ENCODE measurements at regions of chr17 and their contacts with region 1.

Region 1: GRCh38 chr17:3636154-3636907 is at the starts of genes CTNS and SHPK:
- DNase-seq: peak; percentile 92 to 94 (median 93)
- H3K4me3 ChIP-seq: peak within 1 kb of the TSS; percentile 61 to 93 (median 71)
- H3K4me3 Mint-ChIP-seq: peak within 1 kb of the TSS; percentile 86 to 97
- H3K27ac ChIP-seq: peak within 1 kb of the TSS; percentile 84 to 94
- H3K27ac Mint-ChIP-seq: peak within 1 kb of the TSS; percentile 94 to 100 (median 99)
- H3K4me1 ChIP-seq: peaks cover 38 to 49% of the 10 kb centered on the region in 2 donors
- H3K4me1 Mint-ChIP-seq: peaks cover 47% of the 10 kb centered on the region
- H3K27me3 ChIP-seq: no peaks in the 10 kb centered on the region
- H3K27me3 Mint-ChIP-seq: peaks cover 0 to 4% (median 0%) of the 10 kb centered on the region in 3 donors
- CTCF ChIP-seq: no peak
- polyA plus RNA-seq, gene CTNS: 11.6 to 11.8 (median 11.7) TPM
- polyA plus RNA-seq, gene SHPK: 4.3 to 4.6 (median 4.6) TPM

Region 2: DNA sequence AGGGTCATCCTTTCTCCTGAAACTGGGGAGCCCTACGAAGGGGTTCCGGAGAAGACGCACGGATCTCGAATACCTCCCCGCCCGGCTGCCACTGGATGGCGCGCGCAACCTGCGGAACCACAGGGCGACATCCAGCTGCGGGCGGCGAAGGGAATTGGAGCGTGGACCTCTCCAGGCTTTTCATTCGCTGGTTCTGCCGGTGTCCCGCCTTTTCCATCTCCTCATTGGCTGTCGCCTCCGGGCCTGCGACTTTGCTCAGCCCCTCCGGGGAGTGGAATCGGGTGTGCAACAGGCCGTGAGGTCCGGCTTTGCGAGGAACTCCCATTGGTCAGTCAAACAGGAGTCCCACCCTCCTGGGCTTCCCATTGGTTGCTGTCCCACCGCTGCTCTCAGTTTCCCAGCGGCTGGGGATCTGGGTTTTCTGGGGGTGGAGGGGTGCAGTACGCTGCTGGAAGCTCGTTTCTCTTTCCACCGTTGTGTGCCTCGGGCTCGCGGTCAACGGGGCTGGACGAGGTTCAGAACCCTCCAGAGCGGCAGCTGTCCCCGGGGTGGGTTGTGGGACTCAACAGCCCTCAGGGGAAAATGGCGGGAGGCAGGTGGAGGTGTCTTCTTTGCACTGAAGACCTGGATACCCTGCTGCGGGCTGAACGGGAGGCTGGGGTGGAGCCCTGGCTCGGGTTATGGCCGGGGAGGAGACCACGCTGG is 587.4 kb before region 1 on chr17:
- intact Hi-C with region 1: loop called (anchors 2 to 10 kb)
- DNase-seq: peak; percentile 98 to 99 (median 98)
- H3K4me3 ChIP-seq: peak overlapping the region; percentile 63 to 99 (median 96)
- H3K4me3 Mint-ChIP-seq: peak overlapping the region; percentile 88 to 93
- H3K27ac ChIP-seq: peak overlapping the region; percentile 38 to 84
- H3K27ac Mint-ChIP-seq: peak overlapping the region; percentile 68 to 94 (median 85)
- H3K4me1 ChIP-seq: peaks cover 11 to 12% of the 10 kb centered on the region in 2 donors
- H3K4me1 Mint-ChIP-seq: peaks cover 3% of the 10 kb centered on the region
- H3K27me3 ChIP-seq: no peaks in the 10 kb centered on the region
- H3K27me3 Mint-ChIP-seq: peaks cover 0 to 2% (median 0%) of the 10 kb centered on the region in 3 donors
- CTCF ChIP-seq: peak; percentile 84

Region 3: GRCh38 chr17:3535253-3535995 is 100.9 kb before region 1 on chr17:
- intact Hi-C with region 1: no loop called
- DNase-seq: no peak
- H3K4me3 ChIP-seq: no peak overlapping the region
- H3K4me3 Mint-ChIP-seq: peak overlapping the region in 1 of 2 donors; percentile 59
- H3K27ac ChIP-seq: no peak overlapping the region
- H3K27ac Mint-ChIP-seq: peak overlapping the region in 1 of 7 donors; percentile 4
- H3K4me1 ChIP-seq: no peaks in the 10 kb centered on the region
- H3K4me1 Mint-ChIP-seq: peaks cover 4% of the 10 kb centered on the region
- H3K27me3 ChIP-seq: peaks cover 0 to 8% of the 10 kb centered on the region in 2 donors
- H3K27me3 Mint-ChIP-seq: peaks cover 15 to 30% (median 26%) of the 10 kb centered on the region in 3 donors
- CTCF ChIP-seq: peak; percentile 27

Region 4: DNA sequence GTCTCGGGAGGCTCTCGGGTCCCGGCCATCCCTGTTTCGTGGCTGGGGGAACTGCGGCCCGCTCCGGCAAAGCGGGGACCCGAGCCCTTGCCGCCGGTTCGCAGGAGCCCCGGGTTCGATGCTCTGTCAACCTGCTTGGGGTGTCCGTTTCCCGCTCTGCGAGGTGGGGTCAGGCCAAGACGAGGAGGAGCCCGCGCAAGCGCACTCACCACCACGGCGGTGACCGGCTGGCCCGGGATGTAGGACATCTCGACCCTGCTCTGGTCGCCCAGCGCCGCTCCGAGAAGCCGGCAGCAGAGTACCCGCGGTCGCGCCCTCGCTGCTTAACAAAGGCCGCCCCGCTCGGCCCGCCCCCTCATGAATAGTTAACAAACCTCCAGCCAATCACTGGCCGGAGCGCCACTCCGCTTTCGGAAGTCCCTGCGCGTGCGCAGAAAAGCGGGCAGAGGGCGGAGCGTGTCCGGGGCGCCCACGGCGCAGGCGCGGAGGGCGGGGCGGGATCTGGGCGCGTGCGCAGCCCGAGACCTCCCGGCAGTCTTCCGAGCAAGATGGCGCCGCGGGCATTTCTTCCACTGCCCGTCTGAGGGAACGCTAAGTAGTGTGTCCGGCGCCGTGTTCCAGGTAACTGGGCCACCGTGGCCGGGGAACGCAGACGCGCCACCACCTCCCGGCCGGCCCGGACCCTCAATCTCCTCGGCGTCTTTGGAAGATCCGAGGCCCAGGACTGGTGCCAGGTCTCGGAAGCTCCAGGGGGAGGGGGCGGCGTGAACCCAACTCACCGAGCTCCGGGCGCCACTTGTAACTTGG is 32.2 kb after region 1 on chr17 and contains the starts of genes EMC6 and TAX1BP3:
- intact Hi-C with region 1: loop called in 1 of 2 experiments (anchors 2 kb)
- DNase-seq: peak; percentile 95 to 97 (median 96)
- H3K4me3 ChIP-seq: peak within 1 kb of the TSS; percentile 74 to 99 (median 94)
- H3K4me3 Mint-ChIP-seq: peak within 1 kb of the TSS; percentile 86 to 96
- H3K27ac ChIP-seq: peak within 1 kb of the TSS; percentile 68 to 86
- H3K27ac Mint-ChIP-seq: peak within 1 kb of the TSS; percentile 83 to 94 (median 89)
- H3K4me1 ChIP-seq: peaks cover 16 to 23% of the 10 kb centered on the region in 2 donors
- H3K4me1 Mint-ChIP-seq: peaks cover 21% of the 10 kb centered on the region
- H3K27me3 ChIP-seq: no peaks in the 10 kb centered on the region
- H3K27me3 Mint-ChIP-seq: peaks cover 0 to 4% (median 0%) of the 10 kb centered on the region in 3 donors
- CTCF ChIP-seq: no peak
- polyA plus RNA-seq, gene EMC6: 24.4 to 118 (median 105) TPM
- polyA plus RNA-seq, gene TAX1BP3: 29.6 to 71.8 (median 70.9) TPM

Measured in CD14-positive monocyte (primary cell).